ENCODE measurements at regions of chr18 and their contacts with region 1.

Region 1: DNA sequence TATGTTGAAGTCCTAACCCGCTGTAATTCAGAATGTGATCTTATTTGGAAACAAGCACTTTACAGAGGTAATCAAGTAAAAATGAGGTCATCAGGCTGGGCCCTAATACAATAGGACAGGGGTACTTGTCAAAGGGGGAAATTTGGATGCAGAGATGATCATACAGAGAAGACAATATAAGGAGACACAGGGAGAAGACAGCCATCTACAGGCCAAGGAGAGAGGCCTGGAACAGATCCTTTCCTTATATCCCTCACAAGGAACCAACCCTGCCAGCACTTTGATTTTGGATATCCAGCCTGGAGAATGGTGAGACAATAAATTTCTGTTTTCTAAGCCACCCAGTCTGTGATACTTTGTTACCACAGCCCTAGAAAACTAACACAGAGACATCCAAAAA is 104.3 kb downstream of the METTL4 start:
- DNase-seq: no peak
- H3K4me3 ChIP-seq: no peak overlapping the region
- H3K27ac ChIP-seq: no peak overlapping the region
- H3K4me1 ChIP-seq: no peaks in the 10 kb centered on the region
- H3K27me3 ChIP-seq: no peaks in the 10 kb centered on the region
- CTCF ChIP-seq: no peak
- POLR2A ChIP-seq: no peak

Region 2: DNA sequence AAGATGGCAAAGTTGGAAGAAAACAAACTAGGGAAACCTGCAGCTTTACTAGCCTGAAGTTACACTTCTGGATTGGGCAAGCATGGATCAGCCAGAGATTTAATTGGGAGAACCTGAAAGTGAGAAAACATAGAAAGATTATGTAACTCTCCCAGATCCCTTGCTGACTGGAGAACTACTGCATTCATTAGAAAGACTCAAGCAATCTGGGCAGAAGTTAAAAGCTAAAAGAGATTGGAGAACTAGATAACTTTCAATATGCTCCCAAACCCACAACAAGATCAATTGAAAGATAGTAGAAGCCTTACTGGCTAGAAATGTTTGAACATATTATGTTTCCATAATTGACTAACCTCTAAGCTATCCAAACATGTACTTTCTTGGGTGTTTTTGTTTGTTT is 81.6 kb before region 1 on chr18:
- intact Hi-C with region 1: no loop called
- DNase-seq: no peak
- H3K4me3 ChIP-seq: no peak overlapping the region
- H3K27ac ChIP-seq: no peak overlapping the region
- H3K4me1 ChIP-seq: no peaks in the 10 kb centered on the region
- H3K27me3 ChIP-seq: no peaks in the 10 kb centered on the region
- CTCF ChIP-seq: no peak
- POLR2A ChIP-seq: no peak

Region 3: DNA sequence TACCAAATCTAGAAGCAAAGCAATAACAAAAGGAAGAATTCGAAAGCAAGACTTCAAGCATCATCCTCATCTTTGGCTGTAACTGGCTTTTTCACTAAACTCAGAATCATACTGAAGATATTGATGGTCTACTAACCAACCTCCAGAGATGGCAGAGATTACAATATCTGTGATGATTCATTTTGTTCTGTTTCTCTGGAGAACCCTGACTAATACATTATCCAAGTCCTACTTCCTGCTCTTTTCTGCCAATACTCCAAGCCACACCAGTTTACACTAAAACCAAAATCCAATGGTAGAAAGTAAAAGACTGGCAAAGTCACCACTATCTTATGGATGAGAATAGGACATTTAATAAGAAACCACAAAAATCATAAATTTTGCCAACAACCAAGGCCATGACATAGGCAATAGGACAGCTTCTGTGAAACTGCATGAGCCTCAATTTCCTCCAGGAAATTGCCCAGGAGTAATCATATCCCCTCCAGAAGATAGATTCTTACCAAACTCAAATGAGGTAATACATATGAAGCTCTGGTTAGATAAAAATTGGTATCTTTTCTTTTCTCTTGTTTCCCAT is 55.5 kb before region 1 on chr18:
- intact Hi-C with region 1: no loop called
- DNase-seq: no peak
- H3K4me3 ChIP-seq: no peak overlapping the region
- H3K27ac ChIP-seq: no peak overlapping the region
- H3K4me1 ChIP-seq: no peaks in the 10 kb centered on the region
- H3K27me3 ChIP-seq: no peaks in the 10 kb centered on the region
- CTCF ChIP-seq: no peak
- POLR2A ChIP-seq: no peak

Region 4: GRCh38 chr18:2510416-2510815 is 43.4 kb after region 1 on chr18:
- intact Hi-C with region 1: loop called (anchors 2 kb)
- DNase-seq: no peak
- H3K4me3 ChIP-seq: no peak overlapping the region
- H3K27ac ChIP-seq: no peak overlapping the region
- H3K4me1 ChIP-seq: no peaks in the 10 kb centered on the region
- H3K27me3 ChIP-seq: no peaks in the 10 kb centered on the region
- CTCF ChIP-seq: no peak
- POLR2A ChIP-seq: no peak